Left ventricle myocardium inferior (tissue), 1 donor: ENCODE measurements at regions of chr12 and their contacts with region 1.

Region 1: GRCh38 chr12:46556105-46556559 is 183.6 kb upstream of the SLC38A2 start:
- DNase-seq: no peak
- H3K4me3 ChIP-seq: peak overlapping the region; percentile 10
- H3K27ac ChIP-seq: peak overlapping the region; percentile 81
- H3K4me1 ChIP-seq: peaks cover 38% of the 10 kb centered on the region
- H3K27me3 ChIP-seq: no peaks in the 10 kb centered on the region
- CTCF ChIP-seq: no peak

Region 2: DNA sequence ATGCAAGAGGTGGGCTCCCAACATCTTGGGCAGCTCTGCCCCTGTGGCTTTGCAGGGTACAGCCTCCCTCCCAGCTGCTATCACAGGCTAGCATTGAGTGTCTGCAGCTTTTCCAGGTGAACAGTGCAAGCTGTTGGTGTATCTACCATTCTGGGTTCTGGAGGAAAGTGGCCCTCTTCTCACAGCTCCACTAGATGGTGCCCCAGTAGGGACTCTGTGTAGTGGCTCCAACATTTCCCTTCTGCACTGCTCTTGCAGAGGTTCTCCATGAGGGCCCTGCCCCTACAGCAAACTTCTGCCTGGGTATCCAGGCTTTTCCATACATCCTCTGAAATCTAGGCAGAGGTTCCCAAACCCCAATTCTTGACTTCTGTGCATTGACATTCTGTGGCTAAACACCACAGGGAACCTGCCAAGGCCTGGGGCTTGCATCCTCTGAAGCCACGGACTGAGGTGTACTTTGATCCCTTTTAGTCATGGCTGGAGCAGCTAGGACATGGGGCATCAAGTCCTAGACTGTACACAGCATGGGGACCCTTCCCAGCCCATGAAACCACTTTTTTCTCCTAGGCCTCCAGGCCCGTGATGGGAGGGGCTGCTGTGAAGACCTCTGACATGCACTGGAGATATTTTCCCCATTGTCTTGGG is 263.3 kb before region 1 on chr12:
- intact Hi-C with region 1: no loop called
- DNase-seq: no peak
- H3K4me3 ChIP-seq: no peak overlapping the region
- H3K27ac ChIP-seq: no peak overlapping the region
- H3K4me1 ChIP-seq: no peaks in the 10 kb centered on the region
- H3K27me3 ChIP-seq: no peaks in the 10 kb centered on the region
- CTCF ChIP-seq: peak; percentile 45

Region 3: DNA sequence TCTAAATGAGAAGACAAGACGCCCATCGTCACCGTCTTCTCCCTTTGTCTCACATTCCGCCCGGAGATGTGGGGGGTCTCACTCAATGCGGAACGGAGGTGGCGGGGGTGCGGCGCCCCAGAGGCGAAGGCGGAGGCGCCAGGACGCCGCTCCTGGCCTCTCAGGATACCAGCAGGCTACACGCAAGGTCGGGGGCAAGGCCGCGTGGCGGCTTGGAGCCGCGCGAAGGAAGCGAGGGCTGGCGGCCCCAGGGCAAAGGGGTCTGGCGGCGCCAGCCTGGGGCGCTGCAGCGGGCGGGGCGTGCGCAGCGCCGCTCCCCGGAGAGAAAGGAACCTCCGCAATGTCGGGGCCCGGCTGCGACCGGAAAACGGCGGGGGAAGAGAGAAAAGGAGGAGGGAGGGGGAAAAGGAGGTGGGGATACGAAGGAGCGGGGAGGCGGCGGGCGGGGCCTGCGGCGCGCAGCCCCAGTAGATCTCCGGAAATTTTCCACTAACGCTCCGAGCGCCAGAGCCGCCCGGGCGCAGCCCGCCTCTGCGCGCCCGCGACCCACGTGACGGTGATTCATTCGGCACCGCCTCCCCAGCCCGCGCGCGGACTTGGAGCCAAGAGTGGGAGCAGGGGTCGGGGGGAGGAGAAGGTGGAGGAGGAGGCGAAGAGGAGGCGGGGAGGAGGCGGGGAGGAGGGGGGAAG is 173.0 kb before region 1 on chr12:
- intact Hi-C with region 1: loop called (anchors 10 kb)
- DNase-seq: peak; percentile 97
- H3K4me3 ChIP-seq: peak overlapping the region; percentile 73
- H3K27ac ChIP-seq: peak overlapping the region; percentile 100
- H3K4me1 ChIP-seq: peaks cover 50% of the 10 kb centered on the region
- H3K27me3 ChIP-seq: no peaks in the 10 kb centered on the region
- CTCF ChIP-seq: peak; percentile 39